ENCODE measurements at regions of chr3 and their contacts with region 1.

Region 1: DNA sequence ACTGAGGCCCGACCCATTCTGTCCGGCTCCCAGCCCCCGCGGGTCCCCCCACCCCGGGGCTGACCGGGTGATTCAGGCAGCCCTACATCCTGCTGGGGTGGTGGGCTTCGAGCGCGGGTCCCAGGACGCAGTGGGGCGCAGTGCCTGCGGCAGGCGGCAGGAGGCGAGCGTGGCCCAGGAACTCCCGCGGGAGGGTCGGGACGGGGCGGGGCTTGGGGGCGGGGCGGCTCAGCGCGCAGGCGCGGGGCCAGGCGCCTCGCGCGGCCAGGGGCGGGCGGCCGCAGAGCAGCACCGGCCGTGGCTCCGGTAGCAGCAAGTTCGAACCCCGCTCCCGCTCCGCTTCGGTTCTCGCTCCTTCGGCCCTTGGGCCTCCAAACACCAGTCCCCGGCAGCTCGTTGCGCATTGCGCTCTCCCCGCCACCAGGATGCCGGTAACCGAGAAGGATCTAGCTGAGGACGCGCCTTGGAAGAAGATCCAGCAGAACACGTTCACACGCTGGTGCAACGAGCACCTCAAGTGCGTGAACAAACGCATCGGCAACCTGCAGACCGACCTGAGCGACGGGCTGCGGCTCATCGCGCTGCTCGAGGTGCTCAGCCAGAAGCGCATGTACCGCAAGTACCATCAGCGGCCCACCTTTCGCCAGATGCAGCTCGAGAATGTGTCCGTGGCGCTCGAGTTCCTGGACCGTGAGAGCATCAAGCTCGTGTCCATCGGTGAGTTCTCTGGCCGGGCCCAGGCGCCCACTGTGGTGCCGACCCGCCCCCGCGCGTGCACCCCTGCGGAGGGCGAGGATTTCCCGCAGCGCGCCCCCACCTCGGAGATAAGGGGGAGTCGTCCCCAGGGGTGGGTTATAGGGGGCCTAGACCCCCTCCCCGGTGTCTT is at the start of gene FLNB:
- DNase-seq: peak; percentile 77 to 85
- H3K4me3 ChIP-seq: peak within 1 kb of the TSS; percentile 100
- H3K4me3 Mint-ChIP-seq: peak within 1 kb of the TSS; percentile 90
- H3K27ac Mint-ChIP-seq: peak within 1 kb of the TSS; percentile 63
- H3K4me1 ChIP-seq: peaks cover 60% of the 10 kb centered on the region
- H3K4me1 Mint-ChIP-seq: peaks cover 23% of the 10 kb centered on the region
- H3K27me3 ChIP-seq: no peaks in the 10 kb centered on the region
- H3K27me3 Mint-ChIP-seq: no peaks in the 10 kb centered on the region
- CTCF ChIP-seq: peak; percentile 74 to 88
- total RNA-seq, gene FLNB: 315 and 331 TPM in 2 replicates

Region 2: DNA sequence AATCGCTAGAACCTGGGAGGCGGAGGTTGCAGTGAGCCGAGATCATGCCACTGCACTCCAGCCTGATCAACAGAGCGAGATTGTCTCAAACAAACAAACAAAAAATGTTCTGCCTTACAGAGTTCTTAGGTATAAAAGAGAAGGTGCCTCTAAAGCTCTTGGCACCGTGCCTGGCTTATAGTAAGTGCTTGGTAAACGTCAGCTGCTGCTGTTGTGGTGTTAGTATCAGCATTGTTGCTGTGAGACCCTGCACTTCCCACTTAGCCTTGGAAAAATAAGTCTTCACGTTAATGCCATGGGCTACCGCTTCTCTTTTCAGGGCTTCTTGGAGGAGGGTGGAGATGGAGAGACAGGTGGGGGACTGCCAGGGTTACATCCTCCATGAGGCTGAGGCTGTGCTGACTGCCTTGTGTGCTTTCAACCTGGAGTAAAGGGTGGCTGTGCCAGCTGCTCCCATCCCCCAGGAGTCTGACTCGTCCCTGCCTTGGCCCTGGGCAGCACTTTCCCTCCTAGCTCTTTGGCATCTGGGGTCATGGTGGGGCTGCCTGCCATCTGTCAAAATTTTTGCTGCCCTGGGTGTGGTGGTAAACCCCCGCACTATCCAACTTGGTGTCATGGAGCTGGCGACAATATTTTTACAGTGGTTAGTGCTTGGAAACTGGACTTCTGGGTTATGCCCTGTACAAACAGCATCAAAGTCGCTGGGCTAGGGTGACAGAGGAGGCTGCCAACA is 17.6 kb after region 1 on chr3:
- CTCF ChIA-PET with region 1: no interaction called
- POLR2A ChIA-PET with region 1: no interaction called
- intact Hi-C with region 1: no loop called
- DNase-seq: no peak
- H3K4me3 ChIP-seq: no peak overlapping the region
- H3K4me3 Mint-ChIP-seq: no peak overlapping the region
- H3K27ac Mint-ChIP-seq: peak overlapping the region; percentile 14
- H3K4me1 ChIP-seq: peaks cover 32% of the 10 kb centered on the region
- H3K4me1 Mint-ChIP-seq: peaks cover 37% of the 10 kb centered on the region
- H3K27me3 ChIP-seq: no peaks in the 10 kb centered on the region
- H3K27me3 Mint-ChIP-seq: no peaks in the 10 kb centered on the region
- CTCF ChIP-seq: no peak

Region 3: GRCh38 chr3:58173664-58174398 is 165.4 kb after region 1 on chr3:
- CTCF ChIA-PET with region 1: interaction called, 3 read pairs
- POLR2A ChIA-PET with region 1: interaction called, 5 read pairs
- intact Hi-C with region 1: loop called (anchors 2 kb)
- DNase-seq: peak in 1 of 2 experiments; percentile 66
- H3K4me3 ChIP-seq: no peak overlapping the region
- H3K4me3 Mint-ChIP-seq: peak overlapping the region; percentile 48
- H3K27ac Mint-ChIP-seq: peak overlapping the region; percentile 94
- H3K4me1 ChIP-seq: peaks cover 38% of the 10 kb centered on the region
- H3K4me1 Mint-ChIP-seq: peaks cover 57% of the 10 kb centered on the region
- H3K27me3 ChIP-seq: no peaks in the 10 kb centered on the region
- H3K27me3 Mint-ChIP-seq: no peaks in the 10 kb centered on the region
- CTCF ChIP-seq: peak in 1 of 2 experiments; percentile 45